AG04449 (cell line): ENCODE measurements at regions of chr6 and their contacts with region 1.

Region 1: GRCh38 chr6:57316581-57317059 is 810 bp upstream of the PRIM2 start:
- DNase-seq: peak; percentile 65
- H3K4me3 ChIP-seq: peak overlapping the region; percentile 87
- CTCF ChIP-seq: peak; percentile 66

Region 2: DNA sequence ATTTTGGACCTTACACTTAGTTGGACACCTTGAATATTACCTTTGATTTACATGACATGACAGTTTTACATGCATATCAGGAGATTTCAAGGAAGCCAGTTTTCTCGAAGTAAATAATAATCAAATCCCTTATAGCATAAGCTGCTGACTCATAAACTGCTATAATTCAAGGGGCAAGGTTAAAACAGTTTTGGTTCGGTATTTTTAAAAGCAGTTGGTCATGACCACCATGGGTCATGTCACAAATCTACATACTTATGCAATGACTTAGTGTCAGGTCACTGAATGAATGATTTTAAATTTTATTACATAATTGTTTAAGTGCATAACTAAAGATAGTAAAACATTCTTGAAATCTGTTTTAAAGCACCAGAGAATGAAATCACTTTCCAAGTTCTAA is 832.0 kb before region 1 on chr6:
- CTCF ChIA-PET with region 1: no interaction called
- POLR2A ChIA-PET with region 1: no interaction called
- DNase-seq: no peak
- H3K4me3 ChIP-seq: no peak overlapping the region
- CTCF ChIP-seq: no peak

Region 3: DNA sequence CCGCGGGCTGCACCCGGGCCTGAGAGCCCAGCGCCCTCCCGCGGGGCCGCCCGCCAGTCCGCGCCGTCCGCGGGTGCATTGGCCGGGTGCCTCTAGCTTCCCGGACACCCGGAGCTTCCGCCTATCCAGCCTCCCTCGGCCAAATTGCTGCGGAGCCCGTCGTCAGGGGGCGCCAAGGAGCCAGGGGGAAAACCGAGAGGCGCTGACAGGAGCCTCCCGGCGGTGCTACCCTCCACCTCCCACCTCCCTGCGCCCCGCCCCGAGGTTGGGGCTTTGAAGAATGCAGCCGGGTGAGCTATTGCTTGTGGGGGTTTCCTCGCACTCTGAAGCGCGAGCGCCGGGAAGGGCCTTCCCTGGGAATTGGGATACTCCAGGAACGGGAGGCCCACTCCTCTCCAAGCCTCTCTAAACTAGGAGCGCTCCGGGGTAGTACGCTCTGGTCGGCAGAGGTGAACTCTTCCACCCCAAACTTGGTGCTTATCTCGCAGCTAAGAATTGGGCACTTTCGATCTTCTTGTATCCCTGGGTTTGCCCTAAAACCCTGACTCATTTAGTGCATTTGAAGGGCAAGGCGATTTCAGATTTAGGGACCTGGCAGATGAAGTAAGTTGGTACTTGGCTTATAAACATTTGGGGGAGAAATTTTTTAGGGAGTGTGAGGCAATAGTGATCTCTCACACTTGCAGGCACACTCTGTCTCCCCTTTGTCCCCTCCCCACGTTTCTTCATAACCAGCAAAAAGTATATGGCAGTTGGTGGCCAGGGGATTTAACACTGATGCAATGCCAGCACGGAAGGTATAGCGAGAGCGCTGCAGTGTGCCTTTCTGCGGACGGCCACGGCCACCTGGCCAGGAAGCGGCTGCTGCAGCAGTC is 361.2 kb before region 1 on chr6:
- CTCF ChIA-PET with region 1: interaction called, 41 read pairs
- POLR2A ChIA-PET with region 1: no interaction called
- DNase-seq: no peak
- H3K4me3 ChIP-seq: peak overlapping the region; percentile 88
- CTCF ChIP-seq: peak; percentile 95

Region 4: GRCh38 chr6:56977192-56977591 is 339.4 kb before region 1 on chr6:
- CTCF ChIA-PET with region 1: no interaction called
- POLR2A ChIA-PET with region 1: no interaction called
- DNase-seq: no peak
- H3K4me3 ChIP-seq: no peak overlapping the region
- CTCF ChIP-seq: no peak

Region 5: DNA sequence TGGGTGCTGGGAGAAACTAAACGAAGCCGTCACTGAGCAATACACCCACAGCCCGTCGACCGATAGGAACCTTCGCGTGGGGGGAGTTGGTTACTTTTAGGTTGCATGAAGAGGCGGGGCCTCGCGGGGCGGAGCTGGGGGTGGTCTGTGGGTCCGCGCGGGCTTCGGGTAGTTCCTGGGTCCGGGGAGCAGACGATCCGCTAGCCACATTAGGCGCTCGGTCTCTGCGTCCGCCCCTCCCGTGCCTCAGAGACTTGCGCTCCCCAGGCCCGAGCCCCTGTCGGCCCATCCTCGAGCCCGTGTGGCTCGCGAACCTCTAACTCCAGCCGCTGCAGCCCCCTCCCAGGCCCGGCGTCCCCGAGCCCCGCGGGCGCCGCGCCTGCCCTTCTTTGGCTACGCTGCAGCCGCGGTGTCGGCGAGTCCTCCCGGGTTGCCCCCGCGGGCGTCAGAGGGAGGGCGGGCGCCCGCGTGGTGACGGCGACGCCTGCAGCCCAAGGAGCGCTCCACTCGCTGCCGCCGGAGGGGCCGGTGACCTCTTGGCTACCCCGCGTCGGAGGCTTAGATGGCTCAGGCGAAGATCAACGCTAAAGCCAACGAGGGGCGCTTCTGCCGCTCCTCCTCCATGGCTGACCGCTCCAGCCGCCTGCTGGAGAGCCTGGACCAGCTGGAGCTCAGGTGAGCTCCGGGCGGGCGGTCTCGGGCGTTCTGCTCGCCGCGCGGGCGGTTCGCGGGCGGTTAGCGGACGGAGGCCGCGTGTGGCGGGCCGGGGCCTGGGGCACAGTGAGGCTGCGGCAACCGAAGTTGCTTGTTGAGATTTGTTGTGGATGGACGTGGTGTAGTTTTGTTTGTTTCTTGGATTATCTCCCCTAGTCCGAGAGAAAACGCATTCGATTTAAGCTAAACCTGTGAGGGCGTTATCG is 144.2 kb before region 1 on chr6 and contains the start of gene BAG2:
- CTCF ChIA-PET with region 1: interaction called, 35 read pairs
- POLR2A ChIA-PET with region 1: interaction called, 6 read pairs
- DNase-seq: no peak
- H3K4me3 ChIP-seq: peak within 1 kb of the TSS; percentile 65
- CTCF ChIP-seq: no peak

Region 6: DNA sequence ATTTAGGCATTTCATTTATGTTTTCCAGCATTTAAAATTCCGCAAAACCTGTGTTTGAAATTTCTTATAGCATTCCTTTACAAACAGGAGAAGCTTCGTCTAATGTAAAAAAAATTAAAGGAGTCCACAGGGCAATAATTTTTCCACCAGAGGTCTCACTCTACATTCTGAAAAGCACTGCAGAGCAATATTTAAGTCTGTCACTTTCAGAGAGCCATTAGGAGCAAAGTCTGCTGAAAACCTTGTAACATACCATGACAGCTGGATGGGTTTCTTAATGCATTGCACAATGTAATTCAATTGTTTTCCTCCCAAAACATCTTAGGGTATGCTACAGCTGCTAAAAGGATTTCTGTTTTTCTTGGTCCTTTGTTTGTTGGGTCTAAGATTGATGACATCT is 126.5 kb before region 1 on chr6:
- CTCF ChIA-PET with region 1: interaction called, 207 read pairs
- POLR2A ChIA-PET with region 1: interaction called, 4 read pairs
- DNase-seq: no peak
- H3K4me3 ChIP-seq: no peak overlapping the region
- CTCF ChIP-seq: no peak

Region 7: DNA sequence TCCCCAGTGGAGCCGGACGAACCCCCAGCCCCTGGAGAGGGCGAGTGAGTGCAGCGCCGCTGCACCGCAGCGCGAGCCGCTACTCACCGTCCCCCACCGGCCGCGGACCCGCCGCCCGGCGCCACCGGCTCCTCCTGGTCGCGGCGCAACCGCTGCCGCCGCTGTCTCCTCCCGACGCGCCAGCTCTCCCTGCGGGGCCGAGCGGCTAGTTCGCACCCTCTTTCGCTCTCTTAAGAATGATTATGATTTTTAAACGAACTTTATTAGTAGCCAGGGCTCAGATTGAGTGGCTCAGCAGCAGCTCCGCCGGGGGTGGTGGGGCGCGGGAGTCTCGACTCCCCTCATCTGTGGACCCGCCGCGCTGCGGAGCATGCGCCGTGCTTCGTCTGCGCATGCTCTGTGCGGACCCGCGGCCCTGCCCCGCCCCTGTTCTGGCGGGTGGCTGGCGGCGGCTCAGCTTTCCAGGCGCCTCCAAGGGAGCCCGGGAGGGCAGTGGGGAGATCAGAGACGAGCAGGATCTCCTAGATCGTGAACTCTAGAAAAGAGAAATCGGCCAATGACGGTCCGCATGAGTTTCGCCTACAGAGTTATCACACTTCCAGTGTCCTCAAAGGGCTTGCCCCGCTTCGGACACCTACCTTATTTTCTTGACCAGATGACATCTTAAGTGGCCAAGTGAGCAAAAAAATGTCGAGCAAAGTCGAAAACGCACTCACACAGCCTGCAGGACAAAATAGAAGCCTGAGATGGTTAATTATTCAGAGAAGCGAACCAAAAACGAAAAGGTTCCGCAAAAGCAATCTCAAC is 94.5 kb before region 1 on chr6 and contains the start of gene RAB23:
- CTCF ChIA-PET with region 1: interaction called, 23 read pairs
- POLR2A ChIA-PET with region 1: interaction called, 9 read pairs
- DNase-seq: no peak
- H3K4me3 ChIP-seq: peak within 1 kb of the TSS; percentile 83
- CTCF ChIP-seq: no peak